Activated CD4-positive, alpha-beta T cell treated with anti-CD3 and anti-CD28 coated beads, Interleukin-2, amount 10 ng/mL, durations not matched to agents 24 days and 14 days (primary cell): ENCODE measurements at regions of chr12 and their contacts with region 1.

Region 1: GRCh38 chr12:22624870-22625761 is at the start of gene ETNK1:
- DNase-seq: peak; percentile 97
- H3K4me3 Mint-ChIP-seq: peak within 1 kb of the TSS; percentile 97
- H3K27ac Mint-ChIP-seq: peak within 1 kb of the TSS; percentile 93
- H3K4me1 Mint-ChIP-seq: peaks cover 29% of the 10 kb centered on the region
- H3K27me3 Mint-ChIP-seq: peaks cover 18% of the 10 kb centered on the region
- total RNA-seq, gene ETNK1: 94.5 and 102 TPM in 2 replicates

Region 2: GRCh38 chr12:22046090-22046967 is 578.8 kb before region 1 on chr12 and contains the start of gene CMAS:
- intact Hi-C with region 1: loop called (anchors 5 kb)
- DNase-seq: peak; percentile 92
- H3K4me3 Mint-ChIP-seq: peak within 1 kb of the TSS; percentile 98
- H3K27ac Mint-ChIP-seq: peak within 1 kb of the TSS; percentile 89
- H3K4me1 Mint-ChIP-seq: peaks cover 34% of the 10 kb centered on the region
- H3K27me3 Mint-ChIP-seq: no peaks in the 10 kb centered on the region
- total RNA-seq, gene CMAS: 32.9 and 36.7 TPM in 2 replicates

Region 3: DNA sequence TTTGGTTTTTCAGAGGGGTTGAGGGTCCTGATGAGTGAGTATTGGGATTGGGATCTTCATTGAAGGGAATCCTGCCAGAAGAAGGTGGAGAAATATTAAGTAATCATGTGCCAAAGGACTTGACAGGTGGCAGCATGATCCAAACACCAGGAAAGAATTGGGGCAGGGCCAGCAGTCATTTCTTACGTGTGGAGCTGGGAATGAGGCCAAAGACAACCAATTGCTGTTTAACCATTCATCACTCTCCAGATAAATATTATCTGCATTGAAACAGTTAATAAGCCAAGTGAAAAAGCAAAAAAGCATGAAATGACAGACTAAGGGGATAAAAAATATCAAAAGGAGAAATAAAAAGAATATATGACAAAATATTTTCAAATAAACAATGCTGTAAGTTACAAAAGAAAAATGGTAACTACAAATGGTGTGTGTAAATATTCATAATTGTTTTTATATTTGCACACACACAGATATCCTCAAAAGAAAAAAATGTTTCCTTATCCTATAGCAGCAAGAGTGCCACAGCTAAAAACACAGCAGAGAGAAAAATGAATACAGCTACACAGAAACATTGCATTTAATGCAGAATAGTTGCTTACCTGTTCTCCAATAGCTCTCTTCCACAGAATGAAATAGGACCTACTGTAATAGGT is 106.9 kb before region 1 on chr12:
- intact Hi-C with region 1: no loop called
- DNase-seq: no peak
- H3K4me3 Mint-ChIP-seq: no peak overlapping the region
- H3K27ac Mint-ChIP-seq: no peak overlapping the region
- H3K4me1 Mint-ChIP-seq: peaks cover 3% of the 10 kb centered on the region
- H3K27me3 Mint-ChIP-seq: no peaks in the 10 kb centered on the region

Region 4: DNA sequence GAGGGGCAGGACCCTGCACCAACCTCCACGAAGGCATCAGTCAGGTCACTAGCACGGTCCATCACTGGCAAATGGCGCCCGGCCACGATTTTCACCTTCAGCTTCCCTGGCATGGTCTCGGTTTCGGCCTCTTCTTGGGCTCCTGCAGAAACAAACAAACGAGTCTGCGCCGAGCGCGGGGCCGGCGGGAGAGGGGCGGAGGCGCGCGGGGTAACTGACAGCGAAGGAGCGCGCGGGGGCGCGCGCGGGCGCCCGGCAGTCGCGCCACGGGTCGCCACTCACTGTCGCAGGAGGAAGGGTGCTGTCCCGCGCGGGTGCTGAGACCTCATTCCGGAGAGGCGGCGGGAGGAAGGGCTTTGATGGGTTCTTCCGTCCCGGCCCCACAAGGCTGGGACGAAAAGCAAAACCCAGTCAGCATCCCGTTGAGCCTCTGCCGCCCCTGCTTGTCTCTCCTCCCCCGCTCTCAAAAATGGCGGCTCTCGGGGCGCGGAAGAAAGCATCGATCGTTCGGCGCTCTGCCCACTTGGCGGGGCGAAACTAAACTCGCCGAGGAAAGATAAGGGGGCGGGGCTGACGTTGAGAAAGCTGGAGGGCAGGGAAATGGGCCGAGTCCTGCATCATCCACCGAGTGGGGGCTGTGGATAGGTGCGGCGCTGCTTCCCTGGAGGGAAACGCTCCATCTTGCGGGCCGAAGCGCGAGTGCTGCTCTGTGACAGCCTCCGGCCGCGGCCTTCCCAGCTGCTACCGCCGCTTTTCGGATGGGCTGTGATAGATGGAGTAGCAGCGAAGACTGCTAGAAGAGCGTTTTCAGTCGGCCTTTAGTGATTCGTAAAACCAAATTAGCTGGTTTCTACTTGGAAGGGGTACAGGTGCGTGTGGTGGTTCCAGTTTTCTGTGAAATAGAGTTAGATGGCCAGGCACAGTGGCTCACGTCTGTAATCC is 80.8 kb before region 1 on chr12 and contains the start of gene C2CD5:
- intact Hi-C with region 1: loop called (anchors 1 kb)
- DNase-seq: peak; percentile 98
- H3K4me3 Mint-ChIP-seq: peak within 1 kb of the TSS; percentile 92
- H3K27ac Mint-ChIP-seq: peak within 1 kb of the TSS; percentile 97
- H3K4me1 Mint-ChIP-seq: peaks cover 34% of the 10 kb centered on the region
- H3K27me3 Mint-ChIP-seq: peaks cover 16% of the 10 kb centered on the region
- total RNA-seq, gene C2CD5: 31.4 and 35.1 TPM in 2 replicates

Region 5: GRCh38 chr12:22662356-22662755 is 37.2 kb after region 1 on chr12:
- intact Hi-C with region 1: loop called (anchors 5 kb)
- DNase-seq: no peak
- H3K4me3 Mint-ChIP-seq: no peak overlapping the region
- H3K27ac Mint-ChIP-seq: no peak overlapping the region
- H3K4me1 Mint-ChIP-seq: peaks cover 13% of the 10 kb centered on the region
- H3K27me3 Mint-ChIP-seq: no peaks in the 10 kb centered on the region

Region 6: GRCh38 chr12:22684140-22685118 is 59.3 kb after region 1 on chr12:
- intact Hi-C with region 1: loop called (anchors 2 kb)
- DNase-seq: no peak
- H3K4me3 Mint-ChIP-seq: no peak overlapping the region
- H3K27ac Mint-ChIP-seq: no peak overlapping the region
- H3K4me1 Mint-ChIP-seq: peaks cover 20% of the 10 kb centered on the region
- H3K27me3 Mint-ChIP-seq: no peaks in the 10 kb centered on the region